K562 (cell line): ENCODE measurements at regions of chr2 and their contacts with region 1.

Region 1: GRCh38 chr2:168874368-168875054 is 15.7 kb downstream of the SPC25 start:
- DNase-seq: no peak
- ATAC-seq: peak; percentile 27; the same call in 1 of the 3 replicates
- H3K4me3 ChIP-seq: no peak overlapping the region
- H3K27ac ChIP-seq: no peak overlapping the region
- H3K4me1 ChIP-seq: no peaks in the 10 kb centered on the region
- H3K27me3 ChIP-seq: no peaks in the 10 kb centered on the region
- CTCF ChIP-seq: no peak
- EP300 ChIP-seq: no peak
- POLR2A ChIP-seq: no peak
- RAD21 ChIP-seq: no peak

Region 2: DNA sequence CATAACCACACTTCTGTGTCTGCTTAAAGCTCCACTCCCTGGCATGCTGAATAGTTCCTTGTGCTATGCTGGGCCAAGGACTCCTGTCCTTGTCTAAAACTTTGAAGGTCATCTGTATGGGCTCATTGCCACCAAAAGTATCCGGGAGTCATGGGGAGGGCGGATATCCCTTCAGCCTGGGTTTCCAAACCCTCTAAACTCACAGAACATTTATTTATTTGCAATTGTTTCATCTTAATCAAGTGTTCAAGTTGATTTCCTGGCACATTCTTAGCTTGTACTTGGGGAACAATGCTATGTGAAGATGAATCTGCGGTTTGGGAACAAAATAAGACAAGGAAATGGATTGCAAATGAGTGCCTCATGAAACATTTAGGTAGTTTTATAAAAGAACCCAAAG is 70.3 kb before region 1 on chr2:
- CTCF ChIA-PET with region 1: no interaction called
- POLR2A ChIA-PET with region 1: no interaction called
- in situ Hi-C with region 1: no loop called
- intact Hi-C with region 1: no loop called
- DNase-seq: peak in 2 of 4 experiments; percentile 37 to 62
- ATAC-seq: peak; percentile 11
- H3K4me3 ChIP-seq: peak overlapping the region; percentile 38
- H3K27ac ChIP-seq: peak overlapping the region; percentile 89
- H3K4me1 ChIP-seq: peaks cover 13 to 77% of the 10 kb centered on the region in 2 experiments; a peak in 4 of 5 replicates
- H3K27me3 ChIP-seq: no peaks in the 10 kb centered on the region
- CTCF ChIP-seq: no peak
- EP300 ChIP-seq: no peak
- POLR2A ChIP-seq: no peak
- RAD21 ChIP-seq: no peak

Region 3: DNA sequence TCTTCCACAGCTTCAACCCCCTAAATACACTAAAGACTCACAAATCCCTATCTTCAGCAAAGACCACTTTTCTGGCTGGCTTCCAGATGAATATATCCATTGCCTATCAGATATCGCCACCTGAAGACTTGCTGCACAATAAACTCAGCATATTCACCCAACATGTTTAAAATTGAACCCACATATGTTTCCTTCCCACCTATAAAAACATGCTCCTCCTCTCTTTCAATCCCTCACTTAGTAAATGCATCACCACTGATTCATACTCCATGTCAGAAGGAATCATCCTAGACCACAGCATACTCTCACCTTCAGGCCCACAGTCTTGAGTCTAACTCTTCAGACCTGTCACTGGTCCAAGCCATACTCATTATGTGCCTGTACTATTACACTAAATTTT is 10.5 kb after region 1 on chr2:
- CTCF ChIA-PET with region 1: no interaction called
- POLR2A ChIA-PET with region 1: interaction called, 10 read pairs
- in situ Hi-C with region 1: no loop called
- intact Hi-C with region 1: no loop called
- DNase-seq: peak in 2 of 4 experiments; percentile 18 to 34
- ATAC-seq: peak; percentile 22; the same call in 1 of the 3 replicates
- H3K4me3 ChIP-seq: no peak overlapping the region
- H3K27ac ChIP-seq: no peak overlapping the region
- H3K4me1 ChIP-seq: peaks cover 0 to 6% of the 10 kb centered on the region in 2 experiments; a peak in 2 of 5 replicates
- H3K27me3 ChIP-seq: no peaks in the 10 kb centered on the region
- CTCF ChIP-seq: peak in 1 of 3 experiments; percentile 26; a peak in 2 of 6 replicates
- EP300 ChIP-seq: no peak
- POLR2A ChIP-seq: no peak
- RAD21 ChIP-seq: peak in 1 of 2 experiments; percentile 23; a peak in 1 of 4 replicates